Activated naive CD4-positive, alpha-beta T cell treated with anti-CD3 and anti-CD28 coated beads, Interleukin-2, amount 10 ng/mL, durations not matched to agents 7 days and 5 days (primary cell): ENCODE measurements at regions of chr3 and their contacts with region 1.

Region 1: DNA sequence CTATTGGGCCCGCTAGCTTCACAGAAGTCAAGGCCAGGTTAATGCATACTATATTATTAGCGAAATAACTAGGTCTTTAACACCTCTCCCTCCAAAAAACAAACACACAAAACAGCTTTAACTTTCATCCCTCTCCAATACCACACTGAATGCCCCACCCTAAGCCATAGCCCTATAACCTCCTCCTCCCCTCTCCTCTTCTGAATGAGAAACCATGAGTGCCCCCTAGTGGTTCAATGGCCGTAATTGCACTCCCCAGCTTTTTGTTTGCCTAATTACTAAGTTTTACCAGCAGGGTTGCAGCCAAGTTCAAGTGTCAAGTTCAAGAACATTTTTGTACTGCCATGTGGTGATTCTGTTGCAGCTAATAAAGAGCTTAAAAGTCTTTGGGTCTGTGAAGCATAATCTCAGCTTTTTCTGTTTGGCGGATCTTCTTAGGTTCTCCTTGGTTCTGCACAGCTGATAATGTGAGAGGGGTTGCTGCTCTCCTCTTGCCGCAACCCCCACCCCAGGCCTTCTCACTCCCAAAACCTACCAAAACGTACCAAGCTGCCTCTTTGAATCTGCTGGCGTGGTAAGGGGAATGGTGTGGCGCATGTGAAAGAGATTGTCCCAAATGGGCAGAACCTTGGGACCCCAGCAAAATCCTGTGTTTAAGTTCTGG is 57.9 kb downstream of the RPL22L1 start:
- DNase-seq: peak; percentile 79
- H3K4me3 Mint-ChIP-seq: no peak overlapping the region
- H3K27ac Mint-ChIP-seq: no peak overlapping the region
- H3K4me1 Mint-ChIP-seq: peaks cover 5% of the 10 kb centered on the region
- H3K27me3 Mint-ChIP-seq: peaks cover 7% of the 10 kb centered on the region

Region 2: GRCh38 chr3:170414202-170414663 is 397.8 kb before region 1 on chr3:
- CTCF ChIA-PET with region 1: interaction called, 164 read pairs
- DNase-seq: peak; percentile 52
- H3K4me3 Mint-ChIP-seq: no peak overlapping the region
- H3K27ac Mint-ChIP-seq: no peak overlapping the region
- H3K4me1 Mint-ChIP-seq: peaks cover 8% of the 10 kb centered on the region
- H3K27me3 Mint-ChIP-seq: peaks cover 37% of the 10 kb centered on the region

Region 3: DNA sequence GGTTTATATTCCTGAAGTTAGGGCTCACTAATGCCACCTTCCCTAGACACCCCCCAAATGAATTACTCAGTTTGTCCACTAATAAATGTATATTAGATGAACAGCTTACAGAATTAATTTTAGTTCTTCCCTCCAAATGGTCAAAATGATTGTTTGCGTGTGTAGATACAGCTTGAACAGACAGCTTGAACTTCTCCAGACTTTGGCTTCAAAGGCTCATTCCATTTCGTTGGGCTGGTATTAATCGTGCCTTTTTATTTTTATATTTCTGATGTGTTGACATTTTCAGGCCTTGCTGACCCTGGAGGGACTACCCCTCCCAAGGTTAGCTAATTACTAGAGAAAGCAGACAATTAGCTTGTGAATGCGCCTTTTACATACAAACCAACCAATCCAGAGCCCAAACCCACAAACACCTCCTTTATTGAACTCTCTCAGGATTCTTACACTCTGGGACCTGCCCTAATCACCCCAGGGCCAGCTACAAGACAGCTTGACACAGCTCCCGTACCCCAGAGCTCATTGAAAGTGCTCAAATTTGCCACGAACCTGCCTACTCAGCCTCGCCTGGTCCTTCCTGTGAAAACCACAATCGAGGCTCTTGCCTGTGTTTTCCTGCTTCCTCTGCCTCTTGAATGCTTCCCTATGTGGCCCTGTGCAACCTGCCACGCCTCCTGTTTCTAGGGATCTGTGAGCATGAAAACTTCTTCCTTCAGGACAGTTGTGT is 17.6 kb after region 1 on chr3:
- CTCF ChIA-PET with region 1: interaction called, 13 read pairs
- DNase-seq: no peak
- H3K4me3 Mint-ChIP-seq: no peak overlapping the region
- H3K27ac Mint-ChIP-seq: no peak overlapping the region
- H3K4me1 Mint-ChIP-seq: peaks cover 11% of the 10 kb centered on the region
- H3K27me3 Mint-ChIP-seq: peaks cover 48% of the 10 kb centered on the region

Region 4: DNA sequence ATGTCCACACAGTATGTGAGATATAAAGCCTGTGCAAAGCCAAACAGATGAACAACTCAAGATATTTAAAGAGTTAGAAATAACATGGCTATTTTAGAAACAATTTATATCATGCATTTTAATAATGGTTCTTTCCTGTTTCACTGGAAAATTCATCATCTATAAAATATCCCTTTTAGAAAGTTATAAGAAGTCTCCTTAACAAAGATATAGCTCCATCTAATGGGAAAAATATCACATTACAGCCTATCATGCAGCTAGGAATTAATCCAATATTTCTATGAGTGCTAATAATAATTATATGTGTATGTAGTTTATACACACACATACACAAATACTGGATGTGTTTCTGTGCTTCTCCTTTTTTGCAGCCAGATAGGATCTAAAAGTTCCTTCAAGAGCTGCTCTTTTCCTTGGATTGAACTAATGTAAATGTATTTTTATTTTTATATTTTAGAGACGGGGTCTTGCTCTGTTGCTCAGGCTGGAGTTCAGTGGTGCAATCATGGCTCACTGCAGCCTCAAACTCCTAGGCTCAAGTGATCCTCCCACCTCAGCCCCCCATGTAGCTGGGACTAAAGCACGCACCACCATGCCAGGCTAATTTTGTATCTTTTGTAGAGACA is 36.3 kb after region 1 on chr3:
- CTCF ChIA-PET with region 1: interaction called, 19 read pairs
- DNase-seq: no peak
- H3K4me3 Mint-ChIP-seq: no peak overlapping the region
- H3K27ac Mint-ChIP-seq: no peak overlapping the region
- H3K4me1 Mint-ChIP-seq: no peaks in the 10 kb centered on the region
- H3K27me3 Mint-ChIP-seq: peaks cover 22% of the 10 kb centered on the region